A673 (cell line): ENCODE measurements at regions of chr9 and their contacts with region 1.

Region 1: DNA sequence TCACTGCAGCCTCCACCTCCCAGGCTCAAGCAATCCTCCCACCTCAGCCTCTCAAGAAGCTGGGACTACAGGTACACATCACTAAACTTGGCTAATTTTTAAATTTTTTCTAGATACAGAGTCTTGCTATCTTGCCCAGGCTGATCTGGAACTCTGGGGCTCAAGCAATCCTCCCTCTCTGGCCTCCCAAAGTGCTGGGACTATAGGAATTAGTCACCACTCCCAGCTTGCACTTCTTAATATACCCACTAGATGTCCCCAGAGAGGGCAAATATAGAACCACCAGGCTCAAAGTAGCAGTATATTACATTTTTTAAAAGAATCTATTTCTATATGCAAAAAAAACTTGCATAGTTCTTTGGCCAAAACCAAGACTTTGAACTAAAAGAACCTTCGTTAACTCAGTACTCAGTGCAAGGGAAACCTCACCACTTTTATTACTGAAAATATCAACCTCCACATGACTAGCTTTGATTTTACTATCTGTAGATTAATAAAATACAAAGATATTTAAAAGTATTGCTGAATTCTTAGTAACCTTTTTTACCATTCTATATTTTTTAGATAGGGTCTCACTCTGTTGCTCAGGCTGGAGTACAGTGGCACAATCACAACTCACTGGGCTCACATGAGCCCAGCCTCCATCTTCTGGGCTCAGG is 25.8 kb upstream of the HSD17B3 start:
- DNase-seq: peak; percentile 71
- H3K4me3 ChIP-seq: no peak overlapping the region
- H3K27ac ChIP-seq: no peak overlapping the region
- H3K4me1 ChIP-seq: no peaks in the 10 kb centered on the region
- H3K27me3 ChIP-seq: no peaks in the 10 kb centered on the region
- CTCF ChIP-seq: peak; percentile 77

Region 2: GRCh38 chr9:96279960-96280359 is 47.9 kb before region 1 on chr9:
- CTCF ChIA-PET with region 1: no interaction called
- POLR2A ChIA-PET with region 1: no interaction called
- intact Hi-C with region 1: no loop called
- DNase-seq: no peak
- H3K4me3 ChIP-seq: no peak overlapping the region
- H3K27ac ChIP-seq: no peak overlapping the region
- H3K4me1 ChIP-seq: no peaks in the 10 kb centered on the region
- H3K27me3 ChIP-seq: no peaks in the 10 kb centered on the region
- CTCF ChIP-seq: no peak

Region 3: DNA sequence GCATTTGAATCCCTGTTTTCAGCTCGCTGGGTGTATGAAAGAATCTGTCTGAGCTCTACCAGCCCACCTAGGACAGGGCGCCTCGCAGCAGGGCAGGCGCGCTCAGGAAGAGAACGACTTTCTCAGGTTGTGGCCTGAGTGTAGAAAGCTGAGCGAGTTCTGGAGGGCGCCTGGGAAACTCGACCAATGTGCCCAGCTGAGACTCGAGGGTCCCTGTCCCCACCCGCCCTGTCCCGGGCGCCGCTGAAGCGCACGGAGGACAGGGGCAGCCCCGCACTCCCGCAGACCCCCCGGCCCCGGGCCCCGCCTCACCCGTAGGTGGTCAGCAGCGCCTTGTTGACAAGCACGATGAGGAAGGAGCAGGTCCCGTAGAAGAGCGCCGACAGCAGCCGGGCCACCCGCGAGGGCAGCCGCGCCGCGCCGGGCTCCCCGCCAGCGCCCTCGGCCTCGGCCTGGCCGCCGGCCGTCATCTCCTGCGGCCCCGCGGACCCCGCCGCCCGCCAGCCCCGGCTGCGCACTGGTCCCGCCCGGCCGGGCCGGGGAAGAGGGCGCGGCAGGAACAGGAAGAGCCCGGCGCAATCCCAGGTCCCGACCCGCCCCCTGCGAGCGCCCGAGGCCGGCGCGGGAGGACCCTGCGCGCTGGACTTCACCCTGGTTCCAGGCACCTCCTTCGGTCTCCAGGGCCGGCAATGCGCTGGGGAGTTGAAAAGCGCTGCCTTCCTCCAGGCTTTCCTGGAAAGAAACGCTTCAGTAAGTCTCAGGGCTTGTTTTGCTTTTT is 55.5 kb after region 1 on chr9 and contains the start of gene SLC35D2:
- CTCF ChIA-PET with region 1: no interaction called
- POLR2A ChIA-PET with region 1: no interaction called
- intact Hi-C with region 1: no loop called
- DNase-seq: no peak
- H3K4me3 ChIP-seq: peak within 1 kb of the TSS; percentile 35
- H3K27ac ChIP-seq: no peak within 1 kb of the TSS
- H3K4me1 ChIP-seq: peaks cover 15% of the 10 kb centered on the region
- H3K27me3 ChIP-seq: no peaks in the 10 kb centered on the region
- CTCF ChIP-seq: no peak
- total RNA-seq, gene SLC35D2: 1.1 TPM in 2 replicates

Region 4: GRCh38 chr9:96413302-96414221 is 85.7 kb after region 1 on chr9:
- CTCF ChIA-PET with region 1: no interaction called
- POLR2A ChIA-PET with region 1: no interaction called
- intact Hi-C with region 1: loop called (anchors 5 kb)
- DNase-seq: peak; percentile 20
- H3K4me3 ChIP-seq: no peak overlapping the region
- H3K27ac ChIP-seq: no peak overlapping the region
- H3K4me1 ChIP-seq: peaks cover 8% of the 10 kb centered on the region
- H3K27me3 ChIP-seq: no peaks in the 10 kb centered on the region
- CTCF ChIP-seq: no peak

Region 5: DNA sequence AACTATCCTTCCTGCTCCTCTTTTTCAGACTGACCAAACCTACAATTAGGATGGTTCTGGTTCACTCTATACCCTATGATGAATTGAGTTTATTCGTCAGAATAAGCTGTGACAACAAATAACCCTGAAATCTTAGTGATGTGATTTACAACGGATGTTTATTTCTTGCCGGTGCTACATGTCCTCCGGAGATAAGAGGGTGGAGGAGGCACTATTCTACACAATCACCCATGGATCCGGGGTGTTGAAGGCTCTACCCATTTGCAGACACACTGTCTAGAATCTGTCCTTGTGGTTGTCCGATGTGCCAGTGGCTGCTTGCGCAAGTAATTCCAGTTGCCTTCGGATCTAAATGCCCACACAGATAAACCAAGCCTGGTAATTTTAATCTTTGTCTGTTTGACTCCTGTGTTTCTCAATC is 247.1 kb after region 1 on chr9:
- CTCF ChIA-PET with region 1: no interaction called
- POLR2A ChIA-PET with region 1: no interaction called
- intact Hi-C with region 1: no loop called
- DNase-seq: no peak
- H3K4me3 ChIP-seq: no peak overlapping the region
- H3K27ac ChIP-seq: no peak overlapping the region
- H3K4me1 ChIP-seq: peaks cover 14% of the 10 kb centered on the region
- H3K27me3 ChIP-seq: no peaks in the 10 kb centered on the region
- CTCF ChIP-seq: no peak

Region 6: GRCh38 chr9:96654443-96655197 is 326.8 kb after region 1 on chr9:
- CTCF ChIA-PET with region 1: no interaction called
- POLR2A ChIA-PET with region 1: no interaction called
- intact Hi-C with region 1: loop called (anchors 1 kb)
- DNase-seq: peak; percentile 81
- H3K4me3 ChIP-seq: peak overlapping the region; percentile 56
- H3K27ac ChIP-seq: no peak overlapping the region
- H3K4me1 ChIP-seq: no peaks in the 10 kb centered on the region
- H3K27me3 ChIP-seq: no peaks in the 10 kb centered on the region
- CTCF ChIP-seq: no peak

Region 7: DNA sequence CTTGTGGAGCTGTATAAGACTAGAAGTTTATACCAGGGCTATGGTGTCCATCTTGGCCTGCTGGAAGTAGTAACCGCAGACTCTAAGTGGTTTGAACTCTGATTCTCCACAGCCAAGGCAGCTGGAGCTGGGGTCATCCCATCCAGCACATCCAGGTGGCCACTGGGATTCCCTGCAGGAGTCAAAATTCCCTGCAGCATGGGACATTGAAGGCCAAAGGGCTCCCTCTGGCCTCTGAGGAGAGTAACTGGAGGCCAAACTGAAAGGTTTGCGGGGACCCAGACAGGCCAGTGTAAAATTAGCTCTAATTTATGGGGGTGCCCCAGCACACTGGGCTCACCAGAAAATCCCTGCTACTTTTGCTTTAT is 339.5 kb after region 1 on chr9:
- CTCF ChIA-PET with region 1: interaction called, 3 read pairs
- POLR2A ChIA-PET with region 1: no interaction called
- intact Hi-C with region 1: loop called (anchors 2 kb)
- DNase-seq: no peak
- H3K4me3 ChIP-seq: no peak overlapping the region
- H3K27ac ChIP-seq: no peak overlapping the region
- H3K4me1 ChIP-seq: no peaks in the 10 kb centered on the region
- H3K27me3 ChIP-seq: no peaks in the 10 kb centered on the region
- CTCF ChIP-seq: no peak